ENCODE measurements at regions of chr2 and their contacts with region 1.

Region 1: GRCh38 chr2:230160112-230160660 is 59.6 kb downstream of the SP110 start:
- H3K4me3 ChIP-seq: no peak overlapping the region
- H3K27ac ChIP-seq: no peak overlapping the region
- H3K4me1 ChIP-seq: no peaks in the 10 kb centered on the region
- CTCF ChIP-seq: peak; percentile 51; the same call in 1 of the 2 replicates

Region 2: DNA sequence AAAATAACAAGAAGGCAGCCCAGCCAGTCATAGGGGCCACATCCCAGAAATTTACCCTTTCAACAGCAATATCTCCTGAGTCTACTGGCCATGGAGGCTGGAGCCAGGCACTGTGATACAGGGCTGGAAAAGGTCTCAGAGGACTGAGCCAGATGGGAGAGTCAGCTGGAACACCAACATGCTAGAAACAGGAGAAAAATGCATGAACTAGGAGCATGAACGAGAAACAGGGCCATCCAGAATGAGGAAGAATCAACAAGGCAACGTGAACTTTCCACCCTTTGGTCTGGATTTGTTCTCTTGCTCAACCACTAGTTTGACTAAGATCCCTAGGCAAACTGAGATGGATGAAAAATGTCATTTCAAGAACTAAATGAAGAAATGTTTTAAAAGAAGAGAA is 902.2 kb before region 1 on chr2:
- CTCF ChIA-PET with region 1: no interaction called
- POLR2A ChIA-PET with region 1: no interaction called
- H3K4me3 ChIP-seq: no peak overlapping the region
- H3K27ac ChIP-seq: no peak overlapping the region
- H3K4me1 ChIP-seq: no peaks in the 10 kb centered on the region
- CTCF ChIP-seq: no peak

Region 3: DNA sequence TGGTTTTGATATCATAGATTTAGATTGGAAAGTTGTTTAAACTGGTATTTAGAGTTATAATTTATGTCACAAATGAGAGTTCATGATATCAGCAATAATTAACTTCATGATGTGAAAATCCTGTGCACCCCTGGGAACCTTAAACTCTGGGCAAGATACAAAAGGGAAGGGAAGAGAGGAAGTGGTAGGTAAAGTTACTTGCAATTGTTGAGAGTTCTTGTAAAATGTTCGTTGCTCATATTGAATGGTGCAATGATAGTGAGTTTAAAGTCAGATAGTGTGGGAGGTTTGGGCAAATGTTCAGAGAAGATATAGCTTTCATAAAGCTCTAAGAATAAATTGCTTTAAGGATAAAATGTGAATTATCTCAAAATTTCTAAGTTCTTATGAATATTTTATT is 15.8 kb before region 1 on chr2:
- CTCF ChIA-PET with region 1: interaction called, 18 read pairs
- POLR2A ChIA-PET with region 1: no interaction called
- H3K4me3 ChIP-seq: no peak overlapping the region
- H3K27ac ChIP-seq: no peak overlapping the region
- H3K4me1 ChIP-seq: no peaks in the 10 kb centered on the region
- CTCF ChIP-seq: no peak

Measured in HEK293 (cell line).